CD14-positive monocyte (primary cell): ENCODE measurements at regions of chr14 and their contacts with region 1.

Region 1: DNA sequence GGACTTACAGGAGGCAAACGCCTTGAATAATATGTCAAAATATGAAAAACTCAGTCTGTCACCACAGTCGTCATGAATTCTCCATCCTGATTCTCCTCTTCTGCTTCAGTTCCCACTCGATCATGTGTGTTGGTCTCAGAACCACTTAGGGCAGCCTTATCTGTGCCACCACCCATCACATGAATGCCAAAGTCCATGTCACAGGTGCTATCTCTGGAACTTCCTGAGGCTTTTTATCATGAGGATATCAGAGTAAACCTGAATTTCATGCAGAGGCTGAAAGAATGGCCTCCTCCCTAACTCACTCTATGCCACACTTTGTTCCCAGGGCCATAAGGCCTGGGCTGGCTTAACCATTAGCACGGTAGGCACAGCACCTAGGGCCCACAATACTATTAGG is 28.8 kb upstream of the MAP3K9 start:
- DNase-seq: no peak
- H3K4me3 ChIP-seq: no peak overlapping the region
- H3K4me3 Mint-ChIP-seq: no peak overlapping the region
- H3K27ac ChIP-seq: no peak overlapping the region
- H3K27ac Mint-ChIP-seq: no peak overlapping the region
- H3K4me1 ChIP-seq: no peaks in the 10 kb centered on the region
- H3K4me1 Mint-ChIP-seq: peaks cover 3% of the 10 kb centered on the region
- H3K27me3 ChIP-seq: no peaks in the 10 kb centered on the region
- H3K27me3 Mint-ChIP-seq: peaks cover 0 to 5% (median 1%) of the 10 kb centered on the region in 3 donors
- CTCF ChIP-seq: no peak

Region 2: DNA sequence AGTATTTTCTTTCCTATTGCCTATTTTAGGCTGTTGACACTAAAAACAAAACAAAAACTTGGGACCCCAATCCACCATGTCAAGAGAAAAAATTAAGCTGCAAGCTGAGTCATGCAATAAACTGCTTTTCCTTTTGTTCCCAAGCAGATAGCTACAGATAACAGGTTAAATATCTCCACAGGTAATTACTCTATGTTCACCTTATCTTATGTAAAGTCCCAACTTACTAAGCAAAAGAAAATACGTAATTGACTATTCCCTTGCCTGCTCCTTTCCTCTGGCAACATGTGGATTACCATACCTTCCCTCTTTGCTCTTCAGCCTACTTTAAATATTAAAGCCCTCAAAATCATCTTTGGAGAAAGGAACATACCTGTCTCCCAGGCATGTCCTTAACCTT is 459.4 kb before region 1 on chr14:
- intact Hi-C with region 1: loop called in 1 of 2 experiments (anchors 5 kb)
- DNase-seq: no peak
- H3K4me3 ChIP-seq: no peak overlapping the region
- H3K4me3 Mint-ChIP-seq: no peak overlapping the region
- H3K27ac ChIP-seq: no peak overlapping the region
- H3K27ac Mint-ChIP-seq: no peak overlapping the region
- H3K4me1 ChIP-seq: no peaks in the 10 kb centered on the region
- H3K4me1 Mint-ChIP-seq: peaks cover 5% of the 10 kb centered on the region
- H3K27me3 ChIP-seq: no peaks in the 10 kb centered on the region
- H3K27me3 Mint-ChIP-seq: no peaks in the 10 kb centered on the region
- CTCF ChIP-seq: no peak